ENCODE measurements at regions of chr13 and their contacts with region 1.

Region 1: DNA sequence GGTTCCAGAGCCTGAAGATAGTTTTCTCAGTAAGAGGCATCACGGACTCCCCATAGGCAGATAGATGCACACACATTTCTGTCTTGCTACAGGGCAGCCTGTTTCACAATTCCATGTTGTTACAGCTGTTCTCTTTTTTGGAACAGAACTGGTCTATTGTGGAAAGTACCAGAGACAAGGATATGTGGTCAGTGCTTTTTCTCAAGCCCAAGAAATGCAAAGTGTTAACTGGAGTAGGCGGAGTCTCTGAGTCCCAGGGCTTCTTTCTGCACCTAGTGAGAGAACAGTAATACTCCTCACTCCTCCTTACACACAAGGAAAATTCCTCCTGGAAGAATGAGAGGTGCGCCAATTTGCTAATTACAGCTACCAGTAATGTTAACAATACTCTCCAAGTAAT is 141.6 kb upstream of the ARGLU1 start:
- DNase-seq: peak in 2 of 5 donors; percentile 26 to 41
- ATAC-seq: peak; percentile 32 to 93 (median 86)
- H3K4me3 ChIP-seq: peak overlapping the region in 10 of 12 donors; percentile 1 to 51 (median 36)
- H3K27ac ChIP-seq: peak overlapping the region; percentile 65 to 88 (median 82)
- H3K4me1 ChIP-seq: peaks cover 0 to 51% (median 8%) of the 10 kb centered on the region in 12 donors
- H3K27me3 ChIP-seq: no peaks in the 10 kb centered on the region
- CTCF ChIP-seq: no peak
- POLR2A ChIP-seq: no peak

Region 2: GRCh38 chr13:106567474-106568298 is 141.8 kb before region 1 on chr13 and contains the start of gene ARGLU1:
- intact Hi-C with region 1: loop called in 1 of 10 experiments (anchors 10 kb)
- DNase-seq: peak; percentile 94 to 97 (median 95)
- ATAC-seq: peak; percentile 93 to 97 (median 94)
- H3K4me3 ChIP-seq: peak within 1 kb of the TSS; percentile 72 to 98 (median 95)
- H3K27ac ChIP-seq: peak within 1 kb of the TSS; percentile 96 to 100 (median 98)
- H3K4me1 ChIP-seq: peaks cover 0 to 55% (median 40%) of the 10 kb centered on the region in 12 donors
- H3K27me3 ChIP-seq: no peaks in the 10 kb centered on the region
- CTCF ChIP-seq: no peak
- POLR2A ChIP-seq: peak; percentile 47 to 94
- total RNA-seq, gene ARGLU1: 14.2 to 35.6 (median 28.1) TPM

Region 3: GRCh38 chr13:106680796-106681472 is 28.6 kb before region 1 on chr13:
- intact Hi-C with region 1: loop called in 1 of 10 experiments (anchors 2 kb)
- DNase-seq: peak in 3 of 5 donors; percentile 32 to 39 (median 37)
- ATAC-seq: peak in 3 of 4 donors; percentile 20 to 71 (median 56)
- H3K4me3 ChIP-seq: no peak overlapping the region
- H3K27ac ChIP-seq: peak overlapping the region in 11 of 12 donors; percentile 18 to 68 (median 50)
- H3K4me1 ChIP-seq: peaks cover 0 to 27% (median 10%) of the 10 kb centered on the region in 12 donors
- H3K27me3 ChIP-seq: no peaks in the 10 kb centered on the region
- CTCF ChIP-seq: no peak
- POLR2A ChIP-seq: no peak

Region 4: DNA sequence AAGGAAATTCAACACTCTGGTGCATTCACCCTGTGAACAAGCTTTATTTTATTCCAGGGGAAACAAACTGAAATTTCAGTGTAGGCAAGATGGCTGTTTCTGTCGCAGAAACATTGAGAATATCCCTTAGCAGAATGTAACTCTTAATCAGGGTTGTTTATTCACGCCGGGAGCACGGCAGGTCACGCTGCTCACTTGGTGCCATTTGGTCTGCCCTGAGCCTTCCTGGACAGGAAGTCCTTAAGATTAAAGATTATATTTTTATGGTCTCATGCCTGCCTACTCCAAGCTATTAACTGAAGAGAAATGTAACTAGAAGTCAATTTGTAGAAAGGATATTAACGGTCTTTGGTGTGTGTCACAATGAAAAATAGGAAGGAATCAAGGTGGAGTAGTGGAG is 43.7 kb after region 1 on chr13:
- intact Hi-C with region 1: loop called in 3 of 10 experiments (anchors 5 kb)
- DNase-seq: peak in 2 of 5 donors; percentile 26 to 36
- ATAC-seq: peak in 3 of 4 donors; percentile 61 to 67 (median 65)
- H3K4me3 ChIP-seq: peak overlapping the region in 1 of 12 donors; percentile 5
- H3K27ac ChIP-seq: peak overlapping the region in 9 of 12 donors; percentile 11 to 68 (median 38)
- H3K4me1 ChIP-seq: peaks cover 0 to 39% (median 10%) of the 10 kb centered on the region in 12 donors
- H3K27me3 ChIP-seq: no peaks in the 10 kb centered on the region
- CTCF ChIP-seq: no peak
- POLR2A ChIP-seq: no peak

Region 5: DNA sequence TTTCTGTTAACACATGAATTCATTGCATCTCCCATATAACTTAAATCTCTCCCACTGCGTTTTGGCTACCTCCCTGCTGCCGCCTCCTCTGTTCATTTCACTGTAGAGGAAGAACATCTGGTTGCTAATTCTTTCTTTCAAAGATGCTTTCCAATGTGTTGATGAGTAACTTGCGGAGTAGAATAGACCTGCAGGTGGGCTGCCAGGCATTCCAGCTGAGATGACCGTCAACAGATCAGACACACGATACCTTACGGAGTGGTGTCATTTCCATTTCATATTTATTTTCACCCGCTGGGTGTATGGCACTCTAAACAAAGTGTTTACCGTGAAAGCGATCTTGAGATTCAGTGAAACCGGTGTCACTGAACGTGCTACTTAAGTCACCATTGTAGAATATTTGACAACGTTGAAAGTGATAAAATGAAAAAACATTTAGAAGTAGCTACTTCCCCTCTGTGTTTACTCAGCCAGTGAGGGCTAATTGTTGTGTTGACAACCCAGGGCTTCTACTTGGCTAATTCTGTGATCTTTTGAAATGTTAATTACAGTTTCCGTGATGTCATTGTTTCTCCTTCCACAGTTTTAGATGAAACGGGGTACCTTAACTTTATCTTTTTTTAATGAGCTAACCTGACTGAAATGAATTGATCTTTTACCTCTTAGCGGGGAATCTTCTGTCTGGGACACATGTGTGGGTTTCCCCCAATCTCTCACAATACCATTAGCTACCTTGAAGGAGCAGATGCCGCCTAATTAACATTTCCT is 86.9 kb after region 1 on chr13:
- intact Hi-C with region 1: no loop called
- DNase-seq: no peak
- ATAC-seq: no peak
- H3K4me3 ChIP-seq: peak overlapping the region in 9 of 12 donors; percentile 11 to 49 (median 31)
- H3K27ac ChIP-seq: no peak overlapping the region
- H3K4me1 ChIP-seq: peaks cover 0 to 5% (median 0%) of the 10 kb centered on the region in 12 donors
- H3K27me3 ChIP-seq: peaks cover 0 to 8% (median 0%) of the 10 kb centered on the region in 9 donors
- CTCF ChIP-seq: no peak
- POLR2A ChIP-seq: no peak